ENCODE measurements at regions of chr17 and their contacts with region 1.

Region 1: DNA sequence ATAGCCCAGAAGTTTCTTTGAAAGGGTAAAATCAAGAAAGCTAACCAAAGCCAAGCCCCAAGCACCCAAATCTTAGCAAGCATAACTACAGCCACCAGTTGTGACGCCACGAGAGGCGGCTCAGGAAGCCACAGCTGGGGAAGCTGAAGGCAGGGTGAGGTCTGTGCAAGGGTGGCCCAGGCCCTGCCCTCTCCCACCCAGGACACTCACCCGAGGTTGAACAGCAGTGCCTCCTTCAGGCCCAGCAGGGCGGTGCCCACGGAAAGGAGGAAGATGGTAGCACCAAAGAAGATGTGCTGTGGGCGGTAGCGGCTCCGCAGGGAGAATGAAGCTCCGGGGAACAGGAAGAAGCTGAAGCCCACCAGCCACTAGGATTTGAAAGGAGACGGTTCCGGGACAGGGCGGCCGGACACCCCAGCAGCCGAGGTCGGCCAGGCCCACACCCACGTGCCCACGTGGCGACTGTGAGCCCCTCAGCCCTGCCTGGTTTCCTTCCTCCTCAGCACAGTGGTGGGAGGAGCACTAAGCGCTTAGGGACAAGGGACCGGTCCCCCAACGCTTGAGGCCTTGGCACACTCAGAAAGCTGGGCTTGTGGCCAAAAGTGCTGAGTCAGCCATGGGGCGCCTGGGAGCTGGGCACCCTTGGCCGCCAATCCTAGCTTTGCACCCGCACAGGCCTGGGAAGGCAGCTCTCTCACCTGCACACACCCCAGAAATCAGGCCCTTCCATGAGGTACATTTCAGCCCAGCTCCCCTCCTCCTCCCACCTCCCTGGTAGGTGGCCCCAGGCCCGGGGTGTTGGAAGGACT is 11.0 kb downstream of the CYB561 start:
- DNase-seq: peak; percentile 88

Region 2: DNA sequence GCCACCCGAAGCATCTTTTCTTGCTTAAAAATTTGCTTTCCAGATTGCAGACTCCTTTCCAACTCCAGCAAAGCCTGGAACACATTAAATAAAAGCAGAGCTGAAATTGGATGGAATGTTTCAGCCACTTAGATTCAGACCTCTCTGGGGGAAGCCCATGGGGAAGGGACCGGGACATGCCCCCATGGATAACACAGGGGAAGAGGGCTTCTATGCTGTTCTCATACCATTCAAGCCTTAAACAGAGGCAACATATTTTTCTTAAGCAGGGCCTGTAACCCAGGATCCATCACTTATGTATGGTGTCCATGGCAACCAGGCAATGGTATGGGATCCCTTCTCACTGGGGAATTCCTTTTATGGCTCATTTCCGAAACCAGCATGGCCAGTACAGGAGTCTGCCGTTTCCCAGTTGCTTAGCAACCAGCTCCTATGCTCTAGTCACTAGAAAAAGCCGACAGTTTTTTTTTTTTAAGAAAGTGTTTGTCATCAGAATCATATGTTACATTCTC is 565.0 kb before region 1 on chr17:
- intact Hi-C with region 1: no loop called
- DNase-seq: no peak

Region 3: DNA sequence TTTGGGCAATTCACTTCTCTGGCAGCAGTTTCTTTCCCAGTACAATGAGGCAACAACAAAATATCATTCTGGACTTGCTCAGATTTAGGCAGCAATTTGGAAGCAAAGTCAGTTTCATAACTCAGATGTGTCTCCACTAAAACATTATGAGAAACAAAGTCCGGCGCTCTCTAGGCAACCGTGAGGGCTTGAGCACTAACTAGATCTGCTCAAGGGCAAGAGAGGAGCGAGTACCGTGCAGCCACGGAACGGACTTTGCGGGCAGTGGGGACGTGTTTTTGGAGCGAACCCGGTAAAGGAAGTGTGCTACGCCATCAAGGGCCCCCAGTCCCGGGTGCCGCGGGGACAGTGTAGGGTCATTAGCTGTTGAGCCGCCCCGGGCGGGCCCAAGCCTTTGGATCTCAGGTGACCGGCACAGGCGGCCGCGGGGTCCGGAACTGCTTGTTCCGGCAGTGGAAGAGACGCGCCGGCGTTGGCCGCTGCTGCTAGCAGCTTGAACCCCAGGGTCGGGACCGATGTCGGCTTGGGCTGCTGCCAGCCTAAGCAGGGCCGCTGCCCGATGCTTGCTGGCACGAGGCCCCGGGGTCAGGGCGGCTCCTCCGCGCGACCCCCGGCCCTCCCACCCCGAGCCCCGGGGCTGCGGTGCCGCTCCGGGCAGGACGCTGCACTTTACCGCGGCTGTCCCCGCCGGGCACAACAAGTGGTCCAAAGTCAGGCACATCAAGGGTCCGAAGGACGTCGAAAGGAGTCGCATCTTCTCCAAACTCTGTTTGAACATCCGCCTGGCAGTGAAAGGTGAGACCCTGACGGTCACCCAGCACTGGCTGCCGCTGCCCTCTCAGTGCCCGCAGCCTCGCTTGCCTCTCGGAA is 165.7 kb after region 1 on chr17 and contains the start of gene TACO1:
- intact Hi-C with region 1: loop called in 1 of 2 experiments (anchors 5 kb)
- DNase-seq: peak; percentile 93
- total RNA-seq, gene TACO1: 11.6 to 14.3 TPM